K562 (cell line): ENCODE measurements at regions of chr9 and their contacts with region 1.

Region 1: GRCh38 chr9:128656416-128657343 is at the start of gene DYNC2I2:
- DNase-seq: peak; percentile 99 to 100 (median 100)
- ATAC-seq: peak; percentile 95
- H3K4me3 ChIP-seq: peak within 1 kb of the TSS; percentile 68
- H3K27ac ChIP-seq: peak within 1 kb of the TSS; percentile 99
- H3K4me1 ChIP-seq: peaks cover 5 to 28% of the 10 kb centered on the region in 2 experiments; a peak in 4 of 5 replicates
- H3K27me3 ChIP-seq: no peaks in the 10 kb centered on the region; a peak in 1 of 5 replicates
- CTCF ChIP-seq: no peak; a peak in 1 of 6 replicates
- EP300 ChIP-seq: no peak
- POLR2A ChIP-seq: peak; percentile 88
- RAD21 ChIP-seq: peak in 1 of 2 experiments; percentile 36; a peak in 3 of 4 replicates
- polyA plus RNA-seq, gene DYNC2I2: 1.5 to 2.3 TPM

Region 2: GRCh38 chr9:129671519-129671918 is 1014.8 kb after region 1 on chr9:
- CTCF ChIA-PET with region 1: no interaction called
- POLR2A ChIA-PET with region 1: interaction called, 8 read pairs
- in situ Hi-C with region 1: loop called (anchors 5 kb)
- intact Hi-C with region 1: no loop called
- DNase-seq: peak in 1 of 4 experiments; percentile 10
- ATAC-seq: no peak; the same call in none of the 3 replicates
- H3K4me3 ChIP-seq: no peak overlapping the region
- H3K27ac ChIP-seq: no peak overlapping the region
- H3K4me1 ChIP-seq: peaks cover 0 to 37% of the 10 kb centered on the region in 2 experiments; a peak in 2 of 5 replicates
- H3K27me3 ChIP-seq: peaks cover 31 to 72% of the 10 kb centered on the region in 2 experiments
- CTCF ChIP-seq: no peak
- EP300 ChIP-seq: no peak
- POLR2A ChIP-seq: no peak
- RAD21 ChIP-seq: no peak